ENCODE measurements at regions of chr5 and their contacts with region 1.

Region 1: DNA sequence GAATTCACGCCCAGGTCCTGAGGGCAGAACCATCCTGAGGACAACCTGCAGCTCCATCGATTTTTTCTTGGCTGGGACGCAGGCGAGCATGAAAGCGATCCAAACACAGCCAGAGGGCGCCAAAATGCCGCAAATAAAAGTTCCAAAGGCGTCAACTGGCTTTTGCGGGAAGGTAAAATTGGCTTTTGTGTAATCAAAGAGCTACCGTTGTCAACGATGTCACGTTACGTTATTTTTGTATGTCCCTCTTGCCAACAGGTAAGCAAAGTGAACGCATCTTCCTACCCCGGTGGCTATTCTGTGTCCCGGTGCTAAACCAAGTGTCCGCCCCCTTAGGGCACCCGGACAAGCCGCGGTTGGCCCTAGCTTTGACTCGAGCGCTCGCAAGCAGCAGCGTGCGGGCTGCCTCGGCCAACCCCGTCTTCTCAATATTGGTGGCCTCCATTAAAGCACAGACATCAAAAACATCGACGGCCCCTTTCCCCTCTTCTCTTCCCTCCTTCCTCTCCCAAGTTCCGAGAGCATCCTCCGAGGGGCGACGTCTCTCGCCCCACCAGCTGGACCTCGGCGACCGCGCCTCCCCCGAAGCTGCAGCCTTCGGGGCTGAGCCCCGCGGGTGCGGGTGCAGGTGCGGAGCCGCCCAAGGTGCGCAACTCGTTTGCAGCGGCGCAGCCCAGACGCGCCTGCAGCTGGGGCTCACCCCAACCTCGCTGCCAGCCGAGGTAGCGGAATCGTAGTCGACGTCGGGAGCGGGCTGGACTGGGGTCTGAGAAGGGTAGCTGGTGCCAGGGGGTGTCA is 1.1 kb upstream of the BASP1 start:
- DNase-seq: peak; percentile 67
- H3K4me3 Mint-ChIP-seq: peak overlapping the region; percentile 37
- H3K27ac Mint-ChIP-seq: no peak overlapping the region
- H3K4me1 Mint-ChIP-seq: peaks cover 13% of the 10 kb centered on the region
- H3K27me3 Mint-ChIP-seq: peaks cover 45% of the 10 kb centered on the region

Region 2: DNA sequence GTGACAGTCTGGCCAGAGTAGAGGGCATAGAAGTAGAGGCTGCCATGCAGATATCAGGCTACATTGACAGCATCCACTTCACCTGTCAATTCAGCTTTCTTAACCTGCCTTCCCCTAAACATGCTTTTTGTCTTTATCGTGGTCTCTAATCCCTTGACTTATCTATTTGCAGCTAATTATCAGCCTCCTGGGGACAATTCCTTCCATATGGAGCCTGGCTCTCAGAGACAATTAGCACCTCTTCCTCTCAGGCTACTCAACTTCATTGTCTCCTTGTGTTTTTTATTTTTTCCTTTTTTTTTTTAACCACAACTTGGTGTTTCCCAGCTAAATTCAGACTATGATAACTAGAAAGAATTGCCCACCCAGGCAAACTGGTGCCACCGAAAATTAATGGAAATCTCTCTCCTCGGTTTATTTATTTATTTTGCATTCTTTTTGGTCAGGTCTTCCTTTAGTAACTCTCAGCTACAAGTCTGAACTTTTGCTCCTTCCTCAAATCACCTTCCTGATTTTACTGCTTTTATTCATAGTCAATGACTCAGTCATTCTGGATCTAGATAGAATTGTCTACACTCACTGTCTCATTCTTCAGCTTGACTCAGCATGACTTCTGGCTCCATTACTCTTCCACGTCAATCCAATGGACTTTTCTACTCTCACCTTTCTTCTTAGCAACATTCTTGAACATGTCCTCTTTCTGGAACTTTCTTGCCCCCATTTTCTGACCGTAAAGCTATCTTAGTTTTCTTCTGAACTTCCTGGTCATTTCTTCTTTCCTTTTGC is 62.0 kb before region 1 on chr5:
- CTCF ChIA-PET with region 1: no interaction called
- DNase-seq: no peak
- H3K4me3 Mint-ChIP-seq: no peak overlapping the region
- H3K27ac Mint-ChIP-seq: no peak overlapping the region
- H3K4me1 Mint-ChIP-seq: no peaks in the 10 kb centered on the region
- H3K27me3 Mint-ChIP-seq: no peaks in the 10 kb centered on the region

Region 3: DNA sequence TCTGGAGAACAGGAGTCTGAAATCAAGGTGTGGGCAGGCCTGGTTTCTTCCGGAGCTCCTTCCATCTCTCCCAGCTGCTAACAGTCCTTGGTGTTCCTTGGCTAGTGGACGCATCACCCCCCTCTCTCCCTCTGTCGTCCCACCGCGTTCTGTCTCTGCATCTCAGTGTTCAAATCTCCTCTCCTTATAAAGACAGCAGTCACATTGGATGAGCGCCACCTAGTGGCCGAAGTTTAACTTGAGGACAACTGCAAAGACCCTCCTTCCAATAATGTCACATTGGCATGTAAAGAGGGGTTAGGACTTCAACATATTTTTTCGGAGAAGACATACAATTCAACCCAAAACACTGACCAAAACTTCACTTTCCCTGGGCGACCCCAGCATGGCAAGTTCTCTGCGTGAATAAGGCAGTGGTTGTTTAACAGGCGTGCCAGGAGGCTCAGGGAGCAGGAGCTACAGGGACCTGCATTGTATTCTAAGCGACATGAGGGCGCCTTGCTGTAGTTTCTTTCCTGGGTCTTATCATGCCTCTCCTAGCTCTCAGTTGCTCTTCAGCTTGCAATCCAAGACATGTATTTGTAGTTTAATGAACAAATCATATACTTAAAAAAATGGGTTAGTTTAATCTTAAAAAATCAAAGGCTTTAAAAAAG is 26.9 kb before region 1 on chr5:
- CTCF ChIA-PET with region 1: interaction called, 12 read pairs
- DNase-seq: peak; percentile 67
- H3K4me3 Mint-ChIP-seq: no peak overlapping the region
- H3K27ac Mint-ChIP-seq: no peak overlapping the region
- H3K4me1 Mint-ChIP-seq: no peaks in the 10 kb centered on the region
- H3K27me3 Mint-ChIP-seq: no peaks in the 10 kb centered on the region

Region 4: DNA sequence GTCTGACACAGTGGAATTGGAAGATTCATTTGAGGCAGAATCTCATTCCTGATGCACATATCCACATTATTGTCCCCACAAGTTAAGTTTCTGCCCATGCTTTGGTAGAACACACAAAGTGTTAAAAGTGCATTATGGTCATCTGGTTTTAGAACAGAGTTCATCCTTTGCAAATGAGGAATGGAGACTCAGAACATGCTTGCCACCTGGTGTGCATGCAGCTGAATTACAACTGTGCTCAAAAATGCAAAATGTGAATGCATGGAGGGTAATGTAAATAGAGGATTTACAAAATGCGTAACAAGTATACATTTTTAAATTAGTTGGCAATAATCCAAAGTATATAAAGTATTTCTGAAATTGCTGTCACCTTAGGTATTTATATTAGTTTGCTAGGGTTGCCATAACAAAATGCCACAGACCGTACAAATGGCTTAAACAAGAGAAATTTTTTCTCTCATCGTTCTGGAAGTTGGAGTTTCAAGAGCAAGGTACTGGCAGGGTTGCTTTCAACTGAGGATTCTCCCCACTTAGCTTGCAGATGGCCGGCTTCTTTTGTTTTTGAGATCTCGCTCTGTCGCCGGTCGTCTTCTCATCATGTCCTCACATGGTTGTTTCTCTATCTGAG is 1089.0 kb after region 1 on chr5:
- CTCF ChIA-PET with region 1: interaction called, 10 read pairs
- DNase-seq: no peak
- H3K4me3 Mint-ChIP-seq: no peak overlapping the region
- H3K27ac Mint-ChIP-seq: no peak overlapping the region
- H3K4me1 Mint-ChIP-seq: no peaks in the 10 kb centered on the region
- H3K27me3 Mint-ChIP-seq: no peaks in the 10 kb centered on the region

Measured in activated naive CD4-positive, alpha-beta T cell treated with anti-CD3 and anti-CD28 coated beads, Interleukin-2, amount 10 ng/mL, durations not matched to agents 7 days and 5 days (primary cell).